ENCODE measurements at regions of chr2 and their contacts with region 1.

Region 1: GRCh38 chr2:86221066-86221684 is 21.9 kb downstream of the MRPL35 start:
- DNase-seq: peak; percentile 32
- H3K4me3 Mint-ChIP-seq: no peak overlapping the region
- H3K27ac Mint-ChIP-seq: no peak overlapping the region
- H3K4me1 Mint-ChIP-seq: peaks cover 23% of the 10 kb centered on the region
- H3K27me3 Mint-ChIP-seq: no peaks in the 10 kb centered on the region

Region 2: GRCh38 chr2:86297382-86298147 is 76.4 kb after region 1 on chr2:
- intact Hi-C with region 1: loop called (anchors 1 kb)
- DNase-seq: no peak
- H3K4me3 Mint-ChIP-seq: no peak overlapping the region
- H3K27ac Mint-ChIP-seq: no peak overlapping the region
- H3K4me1 Mint-ChIP-seq: no peaks in the 10 kb centered on the region
- H3K27me3 Mint-ChIP-seq: peaks cover 30% of the 10 kb centered on the region

Region 3: GRCh38 chr2:86368161-86368824 is 147.1 kb after region 1 on chr2:
- intact Hi-C with region 1: loop called (anchors 5 kb)
- DNase-seq: peak; percentile 16
- H3K4me3 Mint-ChIP-seq: no peak overlapping the region
- H3K27ac Mint-ChIP-seq: no peak overlapping the region
- H3K4me1 Mint-ChIP-seq: peaks cover 29% of the 10 kb centered on the region
- H3K27me3 Mint-ChIP-seq: peaks cover 4% of the 10 kb centered on the region